WTC11 (cell line): ENCODE measurements at regions of chr14 and their contacts with region 1.

Region 1: DNA sequence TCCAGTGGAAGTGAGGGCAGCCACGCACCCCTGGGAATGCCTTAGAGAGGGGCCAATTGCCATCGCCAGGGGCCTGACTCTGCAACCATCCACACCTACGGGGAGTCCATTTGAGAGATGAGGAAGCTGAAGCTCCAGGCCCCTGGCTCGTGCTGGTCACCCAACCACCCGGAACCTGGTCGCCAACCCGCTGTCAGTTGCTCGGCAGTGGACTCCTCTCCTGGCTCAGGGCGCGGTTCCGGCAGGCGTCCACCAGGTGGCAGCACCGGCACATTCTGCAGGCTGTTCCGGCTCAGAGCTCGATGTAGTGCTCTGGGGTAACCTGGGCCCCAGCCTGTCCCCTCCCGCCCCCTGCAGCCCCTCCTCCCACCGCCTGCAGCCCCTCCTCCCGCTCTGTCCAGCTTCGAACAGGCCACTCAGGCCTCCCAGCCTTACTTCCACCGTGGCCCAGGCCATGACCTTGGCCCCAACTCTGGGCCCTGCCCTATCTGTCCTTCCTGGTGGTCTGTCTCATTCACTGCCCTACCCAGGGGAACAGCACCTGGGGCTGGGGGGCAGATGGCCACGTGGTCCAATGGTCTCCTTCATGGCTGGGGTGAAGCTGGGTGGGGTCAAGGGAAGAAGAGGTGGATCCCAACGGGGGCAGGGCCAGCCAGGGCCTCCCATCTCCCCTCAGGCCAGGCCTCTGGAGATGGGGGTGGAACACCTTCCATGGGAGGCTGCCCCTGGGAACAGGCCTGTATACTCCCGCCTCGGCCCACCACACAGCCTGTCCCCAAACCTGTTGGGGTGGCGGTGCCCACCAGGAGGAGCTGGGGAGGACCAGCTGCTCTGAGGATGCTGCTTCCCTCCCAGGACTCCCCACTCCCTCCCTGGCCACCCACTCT is 15.7 kb downstream of the SIVA1 start:
- DNase-seq: peak; percentile 99
- ATAC-seq: peak; percentile 86
- H3K4me3 Mint-ChIP-seq: peak overlapping the region; percentile 56
- H3K27ac Mint-ChIP-seq: peak overlapping the region; percentile 81
- H3K4me1 Mint-ChIP-seq: peaks cover 17% of the 10 kb centered on the region
- H3K27me3 Mint-ChIP-seq: no peaks in the 10 kb centered on the region; the same call in 1 of the 2 replicates
- CTCF ChIP-seq: peak; percentile 90

Region 2: DNA sequence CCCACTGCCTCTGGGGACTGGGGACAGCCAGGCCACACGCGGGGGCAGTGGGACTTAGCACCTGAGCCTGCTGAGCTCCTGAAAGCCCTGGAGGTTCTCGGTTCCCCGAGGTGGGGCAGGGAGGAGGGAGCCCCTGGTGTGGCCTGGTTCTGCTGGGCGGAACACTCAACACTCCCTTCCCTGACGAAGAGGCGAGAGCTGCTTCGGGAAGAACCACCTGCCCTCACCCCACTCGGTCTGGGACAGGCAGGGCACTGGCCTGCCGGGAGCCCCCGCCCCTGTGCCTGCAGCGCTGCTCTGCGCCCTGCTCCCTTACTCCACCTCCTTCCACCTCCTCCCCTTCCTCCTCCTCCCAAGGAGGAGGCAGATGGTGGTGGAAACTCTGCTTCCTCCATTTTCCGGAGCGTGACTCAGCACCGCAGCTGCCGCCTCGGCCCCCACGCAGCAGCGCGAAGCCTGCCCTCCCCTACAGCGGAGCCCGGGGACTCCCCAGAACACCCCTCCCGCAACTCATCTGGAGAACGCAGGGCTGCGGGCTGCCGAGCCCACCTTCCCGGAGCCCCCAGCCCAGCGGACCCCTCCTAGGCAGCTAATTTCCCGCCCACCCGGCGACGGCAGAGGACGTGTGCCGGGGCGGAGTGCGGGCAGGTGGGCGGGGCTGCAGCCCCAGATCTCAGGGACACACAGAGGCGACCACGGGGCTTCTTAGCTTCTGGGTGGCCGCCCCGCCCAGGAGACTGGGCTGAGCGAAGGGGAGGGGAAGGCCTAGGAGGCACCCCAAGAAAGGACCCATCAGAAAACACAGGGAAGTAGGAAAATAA is 91.0 kb before region 1 on chr14:
- CTCF ChIA-PET with region 1: interaction called, 11 read pairs
- POLR2A ChIA-PET with region 1: no interaction called
- DNase-seq: peak; percentile 66
- ATAC-seq: peak; percentile 23
- H3K4me3 Mint-ChIP-seq: peak overlapping the region; percentile 67
- H3K27ac Mint-ChIP-seq: peak overlapping the region; percentile 79
- H3K4me1 Mint-ChIP-seq: peaks cover 50% of the 10 kb centered on the region
- H3K27me3 Mint-ChIP-seq: peaks cover 10% of the 10 kb centered on the region
- CTCF ChIP-seq: no peak

Region 3: GRCh38 chr14:104752735-104753531 is 15.7 kb before region 1 on chr14 and contains the start of gene SIVA1:
- CTCF ChIA-PET with region 1: interaction called, 62 read pairs
- POLR2A ChIA-PET with region 1: interaction called, 10 read pairs
- DNase-seq: peak; percentile 100
- ATAC-seq: peak; percentile 95
- H3K4me3 Mint-ChIP-seq: peak within 1 kb of the TSS; percentile 95
- H3K27ac Mint-ChIP-seq: peak within 1 kb of the TSS; percentile 77
- H3K4me1 Mint-ChIP-seq: peaks cover 11% of the 10 kb centered on the region
- H3K27me3 Mint-ChIP-seq: peaks cover 14% of the 10 kb centered on the region
- CTCF ChIP-seq: no peak
- total RNA-seq, gene SIVA1: 113 to 128 TPM (median 124 TPM) in 3 replicates

Region 4: GRCh38 chr14:104800015-104800770 is 31.5 kb after region 1 on chr14:
- CTCF ChIA-PET with region 1: interaction called, 67 read pairs
- POLR2A ChIA-PET with region 1: interaction called, 4 read pairs
- DNase-seq: peak; percentile 70
- ATAC-seq: peak; percentile 21
- H3K4me3 Mint-ChIP-seq: peak overlapping the region; percentile 88
- H3K27ac Mint-ChIP-seq: peak overlapping the region; percentile 93
- H3K4me1 Mint-ChIP-seq: peaks cover 32% of the 10 kb centered on the region
- H3K27me3 Mint-ChIP-seq: peaks cover 65% of the 10 kb centered on the region
- CTCF ChIP-seq: no peak

Region 5: GRCh38 chr14:104843442-104844305 is 75.0 kb after region 1 on chr14:
- CTCF ChIA-PET with region 1: interaction called, 20 read pairs
- POLR2A ChIA-PET with region 1: no interaction called
- DNase-seq: peak; percentile 77
- ATAC-seq: peak; percentile 78
- H3K4me3 Mint-ChIP-seq: peak overlapping the region; percentile 75
- H3K27ac Mint-ChIP-seq: peak overlapping the region; percentile 68; the same call in 1 of the 2 replicates
- H3K4me1 Mint-ChIP-seq: peaks cover 13% of the 10 kb centered on the region
- H3K27me3 Mint-ChIP-seq: peaks cover 78% of the 10 kb centered on the region
- CTCF ChIP-seq: no peak

Region 6: GRCh38 chr14:104876251-104876699 is 107.6 kb after region 1 on chr14:
- CTCF ChIA-PET with region 1: interaction called, 12 read pairs
- POLR2A ChIA-PET with region 1: no interaction called
- DNase-seq: peak; percentile 80
- ATAC-seq: peak; percentile 92
- H3K4me3 Mint-ChIP-seq: no peak overlapping the region
- H3K27ac Mint-ChIP-seq: no peak overlapping the region
- H3K4me1 Mint-ChIP-seq: peaks cover 13% of the 10 kb centered on the region
- H3K27me3 Mint-ChIP-seq: no peaks in the 10 kb centered on the region
- CTCF ChIP-seq: no peak

Region 7: DNA sequence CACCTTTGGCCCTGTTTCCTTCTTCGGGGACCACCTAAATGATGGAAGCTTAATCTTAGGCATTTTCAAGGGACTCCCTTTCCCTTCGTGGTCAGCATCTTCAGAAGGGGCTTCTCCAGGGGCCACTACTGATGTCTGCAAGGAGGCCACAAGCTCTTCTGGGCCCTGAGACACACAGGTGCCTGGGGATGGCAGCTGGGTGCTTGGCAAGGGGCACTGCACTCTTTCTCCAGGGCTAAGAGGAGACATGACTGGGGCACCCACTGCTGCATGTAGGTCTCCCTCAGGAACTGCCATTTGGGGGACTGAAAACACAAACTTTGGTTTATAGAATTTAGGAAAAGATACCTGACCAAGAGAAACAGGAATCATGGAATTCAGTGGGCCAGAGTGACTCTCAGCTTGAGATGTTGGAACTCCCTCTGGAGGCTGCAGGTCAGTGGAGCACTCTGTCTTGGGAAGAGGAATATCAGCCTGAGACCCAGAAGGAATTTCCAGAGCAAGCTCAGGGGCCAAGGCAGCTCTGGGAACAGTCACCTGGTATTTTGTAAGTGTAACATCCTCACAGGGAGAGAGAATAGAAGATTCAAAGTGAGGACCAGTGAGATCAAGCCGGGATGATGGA is 172.0 kb after region 1 on chr14:
- CTCF ChIA-PET with region 1: interaction called, 10 read pairs
- POLR2A ChIA-PET with region 1: no interaction called
- DNase-seq: peak; percentile 9
- ATAC-seq: peak; percentile 59; the same call in 1 of the 2 replicates
- H3K4me3 Mint-ChIP-seq: no peak overlapping the region
- H3K27ac Mint-ChIP-seq: no peak overlapping the region; the same call in 1 of the 2 replicates
- H3K4me1 Mint-ChIP-seq: no peaks in the 10 kb centered on the region
- H3K27me3 Mint-ChIP-seq: peaks cover 47% of the 10 kb centered on the region
- CTCF ChIP-seq: no peak